Activated naive CD4-positive, alpha-beta T cell treated with anti-CD3 and anti-CD28 coated beads, Interleukin-2, amount 10 ng/mL, durations not matched to agents 7 days and 5 days (primary cell): ENCODE measurements at regions of chr6 and their contacts with region 1.

Region 1: DNA sequence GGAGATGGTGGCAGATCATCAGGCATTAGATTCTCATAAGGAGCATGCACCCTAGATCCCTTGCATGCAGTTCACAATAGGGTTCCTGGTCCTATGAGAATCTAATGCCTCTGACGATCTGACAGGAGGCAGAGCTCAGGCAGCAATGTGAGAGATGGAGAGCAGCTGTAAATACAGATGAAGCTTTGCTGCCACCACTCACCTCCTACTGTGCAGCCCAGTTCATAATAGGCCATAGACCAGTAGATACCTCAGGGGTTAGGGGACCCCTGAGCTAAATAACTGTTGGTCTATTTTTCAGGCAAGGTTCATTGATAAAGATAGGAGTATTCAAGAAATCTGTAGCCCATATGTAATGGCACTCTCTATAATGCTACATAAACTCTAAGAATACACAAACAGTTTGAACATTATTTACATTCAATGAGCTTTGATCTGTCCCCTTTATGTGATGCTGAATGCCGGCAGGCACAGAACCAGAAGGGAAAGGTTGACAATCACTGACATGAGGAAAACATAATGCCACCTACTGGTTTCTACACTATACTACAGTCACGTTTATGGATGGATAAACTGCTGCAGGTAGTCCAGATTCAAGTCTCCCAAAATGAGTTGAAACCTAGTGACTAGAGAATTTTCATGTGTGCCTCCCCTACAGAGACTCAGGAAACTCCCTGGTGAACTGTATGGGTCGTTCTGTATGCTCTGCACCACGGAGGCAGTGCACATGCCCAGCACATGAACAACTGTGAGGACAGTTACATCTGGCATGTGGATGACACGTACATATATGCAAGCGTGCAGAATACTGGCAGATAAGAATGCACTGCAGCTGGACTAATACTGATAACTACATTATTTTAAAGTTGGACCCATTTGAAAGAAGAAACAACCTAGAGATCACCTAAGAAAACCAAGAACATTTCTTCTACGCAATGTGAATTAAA is 72.0 kb downstream of the DST start:
- DNase-seq: no peak
- H3K4me3 Mint-ChIP-seq: no peak overlapping the region
- H3K27ac Mint-ChIP-seq: no peak overlapping the region
- H3K4me1 Mint-ChIP-seq: no peaks in the 10 kb centered on the region
- H3K27me3 Mint-ChIP-seq: peaks cover 2% of the 10 kb centered on the region

Region 2: GRCh38 chr6:56101141-56101553 is 469.5 kb before region 1 on chr6:
- CTCF ChIA-PET with region 1: no interaction called
- DNase-seq: no peak
- H3K4me3 Mint-ChIP-seq: no peak overlapping the region
- H3K27ac Mint-ChIP-seq: no peak overlapping the region
- H3K4me1 Mint-ChIP-seq: no peaks in the 10 kb centered on the region
- H3K27me3 Mint-ChIP-seq: no peaks in the 10 kb centered on the region

Region 3: GRCh38 chr6:56204134-56204533 is 366.6 kb before region 1 on chr6:
- CTCF ChIA-PET with region 1: no interaction called
- DNase-seq: no peak
- H3K4me3 Mint-ChIP-seq: no peak overlapping the region
- H3K27ac Mint-ChIP-seq: no peak overlapping the region
- H3K4me1 Mint-ChIP-seq: no peaks in the 10 kb centered on the region
- H3K27me3 Mint-ChIP-seq: no peaks in the 10 kb centered on the region

Region 4: GRCh38 chr6:56347526-56347925 is 223.2 kb before region 1 on chr6:
- CTCF ChIA-PET with region 1: no interaction called
- DNase-seq: no peak
- H3K4me3 Mint-ChIP-seq: no peak overlapping the region
- H3K27ac Mint-ChIP-seq: no peak overlapping the region
- H3K4me1 Mint-ChIP-seq: no peaks in the 10 kb centered on the region
- H3K27me3 Mint-ChIP-seq: no peaks in the 10 kb centered on the region

Region 5: GRCh38 chr6:56359201-56359899 is 211.3 kb before region 1 on chr6:
- CTCF ChIA-PET with region 1: interaction called, 16 read pairs
- DNase-seq: peak; percentile 72
- H3K4me3 Mint-ChIP-seq: no peak overlapping the region
- H3K27ac Mint-ChIP-seq: no peak overlapping the region
- H3K4me1 Mint-ChIP-seq: no peaks in the 10 kb centered on the region
- H3K27me3 Mint-ChIP-seq: peaks cover 5% of the 10 kb centered on the region

Region 6: DNA sequence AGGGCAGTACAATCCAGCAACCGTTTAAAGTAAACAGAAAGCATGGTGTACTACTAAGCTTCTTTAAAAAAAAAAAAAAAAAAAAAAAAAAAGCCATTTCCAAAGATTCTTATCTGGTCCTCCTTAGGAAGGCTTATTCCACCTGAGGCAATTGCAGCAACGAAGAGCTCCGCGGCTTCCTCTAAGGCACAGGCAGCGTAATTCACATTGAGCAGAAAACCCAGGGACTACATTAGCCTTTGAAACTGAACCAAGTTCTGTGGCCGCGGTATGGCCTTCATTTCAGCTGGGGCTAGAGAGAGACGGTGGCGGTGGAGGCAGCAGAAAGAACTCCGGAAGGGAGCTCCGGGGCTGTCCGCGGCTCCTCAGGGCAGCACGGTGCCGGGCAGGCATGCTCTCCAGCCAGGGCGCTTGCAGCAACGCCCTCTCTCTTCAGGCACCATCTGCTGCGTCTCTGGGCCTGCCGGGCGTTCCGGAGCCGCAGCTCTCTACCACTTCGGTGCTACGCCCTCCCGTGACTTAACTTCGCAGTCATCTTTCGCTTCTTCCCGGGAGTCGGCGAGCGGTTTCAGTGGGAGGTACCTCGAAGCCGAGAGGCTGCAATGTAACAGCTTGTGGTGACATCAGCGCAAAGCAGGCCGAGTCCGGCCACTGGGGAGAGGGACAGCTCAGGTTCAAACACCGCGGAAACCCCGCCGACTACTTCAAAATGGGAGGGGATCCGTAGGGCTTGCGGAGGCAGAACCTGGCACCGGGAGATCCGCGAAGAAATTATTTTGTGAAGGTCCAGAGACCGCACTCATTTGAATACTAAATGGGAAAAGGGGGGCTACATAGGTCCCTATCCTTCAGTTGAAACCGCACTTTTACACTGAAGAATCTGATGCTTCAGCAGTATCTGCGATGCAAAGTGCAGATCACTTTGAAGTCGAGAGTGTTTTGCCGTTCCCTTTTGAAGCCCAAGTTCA is 28.0 kb before region 1 on chr6:
- CTCF ChIA-PET with region 1: interaction called, 10 read pairs
- DNase-seq: peak; percentile 75
- H3K4me3 Mint-ChIP-seq: no peak overlapping the region
- H3K27ac Mint-ChIP-seq: no peak overlapping the region
- H3K4me1 Mint-ChIP-seq: no peaks in the 10 kb centered on the region
- H3K27me3 Mint-ChIP-seq: peaks cover 3% of the 10 kb centered on the region

Region 7: DNA sequence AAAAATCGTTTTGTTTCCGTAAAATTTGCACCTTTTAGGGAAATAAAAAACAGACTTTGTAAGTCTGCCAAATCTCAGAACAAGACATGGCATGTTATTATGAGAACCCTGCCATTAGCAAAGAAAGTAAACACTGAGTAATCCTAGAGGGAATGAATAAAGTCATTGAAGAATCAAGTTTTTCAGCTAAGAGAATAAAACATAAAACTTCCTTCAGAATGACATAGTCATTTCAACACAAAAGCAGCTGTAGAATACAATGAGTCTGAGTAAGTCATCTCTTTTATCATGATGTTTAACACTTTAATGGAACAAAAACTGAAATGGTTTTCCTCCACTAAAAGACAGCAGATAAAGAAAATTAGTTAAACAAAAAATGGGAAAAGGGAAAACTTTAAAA is 82.3 kb after region 1 on chr6:
- CTCF ChIA-PET with region 1: no interaction called
- DNase-seq: no peak
- H3K4me3 Mint-ChIP-seq: no peak overlapping the region
- H3K27ac Mint-ChIP-seq: no peak overlapping the region
- H3K4me1 Mint-ChIP-seq: no peaks in the 10 kb centered on the region
- H3K27me3 Mint-ChIP-seq: no peaks in the 10 kb centered on the region